ENCODE measurements at regions of chr6 and their contacts with region 1.

Region 1: GRCh38 chr6:31795616-31796298 is at the start of gene VARS1:
- DNase-seq: peak; percentile 96
- ATAC-seq: peak; percentile 84
- H3K4me3 Mint-ChIP-seq: peak within 1 kb of the TSS; percentile 99
- H3K27ac Mint-ChIP-seq: peak within 1 kb of the TSS; percentile 97
- H3K4me1 Mint-ChIP-seq: peaks cover 9% of the 10 kb centered on the region
- H3K27me3 Mint-ChIP-seq: no peaks in the 10 kb centered on the region
- CTCF ChIP-seq: peak; percentile 57
- total RNA-seq, gene VARS1: 147 to 177 TPM (median 161 TPM) in 3 replicates

Region 2: GRCh38 chr6:31680840-31681671 is 114.7 kb before region 1 on chr6 and contains the start of gene LY6G5C:
- CTCF ChIA-PET with region 1: interaction called, 11 read pairs
- POLR2A ChIA-PET with region 1: no interaction called
- DNase-seq: peak; percentile 77
- ATAC-seq: peak; percentile 39
- H3K4me3 Mint-ChIP-seq: peak within 1 kb of the TSS; percentile 89
- H3K27ac Mint-ChIP-seq: no peak within 1 kb of the TSS
- H3K4me1 Mint-ChIP-seq: peaks cover 16% of the 10 kb centered on the region
- H3K27me3 Mint-ChIP-seq: peaks cover 24% of the 10 kb centered on the region
- CTCF ChIP-seq: peak; percentile 6; the same call in 1 of the 2 replicates
- total RNA-seq, gene LY6G5C: 0.98 to 1.6 TPM (median 1.0 TPM) in 3 replicates

Region 3: GRCh38 chr6:31739639-31740396 is 55.9 kb before region 1 on chr6 and contains the start of gene MSH5:
- CTCF ChIA-PET with region 1: interaction called, 14 read pairs
- POLR2A ChIA-PET with region 1: interaction called, 3 read pairs
- DNase-seq: peak; percentile 98
- ATAC-seq: peak; percentile 89
- H3K4me3 Mint-ChIP-seq: peak within 1 kb of the TSS; percentile 80
- H3K27ac Mint-ChIP-seq: peak within 1 kb of the TSS; percentile 85
- H3K4me1 Mint-ChIP-seq: peaks cover 42% of the 10 kb centered on the region
- H3K27me3 Mint-ChIP-seq: no peaks in the 10 kb centered on the region; the same call in 1 of the 2 replicates
- CTCF ChIP-seq: no peak
- total RNA-seq, gene MSH5: 43.1 to 62.3 TPM (median 56.1 TPM) in 3 replicates

Region 4: DNA sequence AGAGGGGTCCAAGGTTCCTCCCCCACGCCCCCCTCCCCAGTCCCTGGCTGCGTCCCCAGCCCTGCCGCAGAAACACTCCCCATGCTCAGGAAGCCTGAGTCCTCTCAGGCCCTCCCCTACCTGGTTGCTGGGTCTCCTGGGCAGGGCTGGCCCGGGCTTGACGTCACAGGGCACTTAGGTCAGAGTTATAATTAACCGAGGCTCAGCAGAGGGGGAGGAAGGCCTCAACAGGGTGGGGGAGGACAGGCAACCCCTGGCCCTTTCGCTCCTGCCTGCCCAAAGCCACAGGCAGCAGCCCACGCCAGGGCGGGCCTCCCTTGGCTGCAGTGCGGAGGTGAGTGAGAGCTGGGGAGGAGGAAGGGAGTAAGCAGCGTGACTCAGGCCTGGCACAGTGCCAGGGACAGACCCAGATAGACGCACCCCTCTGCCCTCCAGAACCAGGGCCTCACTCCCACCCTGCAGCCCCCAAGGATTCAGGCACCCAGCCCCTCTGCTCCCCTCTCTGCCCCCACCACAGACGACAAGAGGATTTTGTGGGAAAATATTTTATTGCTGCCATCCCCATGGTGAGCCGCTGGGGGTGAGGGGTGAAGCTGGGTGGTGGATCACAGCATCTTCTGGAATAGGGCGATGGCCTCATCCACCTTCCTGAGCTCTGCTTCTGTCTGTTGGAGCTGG is 18.6 kb before region 1 on chr6 and contains the start of gene VWA7:
- CTCF ChIA-PET with region 1: interaction called, 16 read pairs
- POLR2A ChIA-PET with region 1: interaction called, 4 read pairs
- DNase-seq: peak; percentile 35
- ATAC-seq: peak; percentile 44
- H3K4me3 Mint-ChIP-seq: no peak within 1 kb of the TSS
- H3K27ac Mint-ChIP-seq: peak within 1 kb of the TSS; percentile 68; the same call in 1 of the 2 replicates
- H3K4me1 Mint-ChIP-seq: 0 out of 2 replicates have a peak, but pooled peaks cover 2% of the 10 kb centered on the region
- H3K27me3 Mint-ChIP-seq: no peaks in the 10 kb centered on the region
- CTCF ChIP-seq: no peak
- total RNA-seq, gene VWA7: 1.2 to 1.8 TPM (median 1.4 TPM) in 3 replicates

Region 5: GRCh38 chr6:31806465-31807272 is 10.9 kb after region 1 on chr6 and contains the start of gene LSM2:
- CTCF ChIA-PET with region 1: interaction called, 30 read pairs
- POLR2A ChIA-PET with region 1: interaction called, 4 read pairs
- DNase-seq: peak; percentile 98
- ATAC-seq: peak; percentile 95
- H3K4me3 Mint-ChIP-seq: peak within 1 kb of the TSS; percentile 99
- H3K27ac Mint-ChIP-seq: peak within 1 kb of the TSS; percentile 99
- H3K4me1 Mint-ChIP-seq: peaks cover 9% of the 10 kb centered on the region
- H3K27me3 Mint-ChIP-seq: no peaks in the 10 kb centered on the region; the same call in 1 of the 2 replicates
- CTCF ChIP-seq: no peak
- total RNA-seq, gene LSM2: 104 to 121 TPM (median 119 TPM) in 3 replicates

Region 6: DNA sequence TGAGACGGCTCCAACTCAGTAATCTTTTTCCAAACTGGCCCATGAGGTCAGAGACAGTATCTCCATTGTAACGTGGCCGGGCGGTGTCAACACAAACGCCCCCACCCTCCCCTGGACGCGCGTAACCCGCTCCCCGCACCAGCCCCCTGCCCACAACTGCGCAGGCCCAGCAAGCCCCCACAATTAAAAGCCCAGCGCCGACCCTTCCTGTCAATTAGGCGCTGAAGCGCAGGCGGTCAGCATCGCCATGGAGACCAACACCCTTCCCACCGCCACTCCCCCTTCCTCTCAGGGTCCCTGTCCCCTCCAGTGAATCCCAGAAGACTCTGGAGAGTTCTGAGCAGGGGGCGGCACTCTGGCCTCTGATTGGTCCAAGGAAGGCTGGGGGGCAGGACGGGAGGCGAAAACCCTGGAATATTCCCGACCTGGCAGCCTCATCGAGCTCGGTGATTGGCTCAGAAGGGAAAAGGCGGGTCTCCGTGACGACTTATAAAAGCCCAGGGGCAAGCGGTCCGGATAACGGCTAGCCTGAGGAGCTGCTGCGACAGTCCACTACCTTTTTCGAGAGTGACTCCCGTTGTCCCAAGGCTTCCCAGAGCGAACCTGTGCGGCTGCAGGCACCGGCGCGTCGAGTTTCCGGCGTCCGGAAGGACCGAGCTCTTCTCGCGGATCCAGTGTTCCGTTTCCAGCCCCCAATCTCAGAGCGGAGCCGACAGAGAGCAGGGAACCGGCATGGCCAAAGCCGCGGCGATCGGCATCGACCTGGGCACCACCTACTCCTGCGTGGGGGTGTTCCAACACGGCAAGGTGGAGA is 19.5 kb after region 1 on chr6 and contains the starts of genes HSPA1A and HSPA1L:
- CTCF ChIA-PET with region 1: interaction called, 19 read pairs
- POLR2A ChIA-PET with region 1: interaction called, 18 read pairs
- DNase-seq: peak; percentile 98
- ATAC-seq: peak; percentile 91
- H3K4me3 Mint-ChIP-seq: peak within 1 kb of the TSS; percentile 85
- H3K27ac Mint-ChIP-seq: peak within 1 kb of the TSS; percentile 98
- H3K4me1 Mint-ChIP-seq: peaks cover 27% of the 10 kb centered on the region
- H3K27me3 Mint-ChIP-seq: no peaks in the 10 kb centered on the region; the same call in 1 of the 2 replicates
- CTCF ChIP-seq: no peak
- total RNA-seq, gene HSPA1A: 57.2 to 80.1 TPM (median 75.8 TPM) in 3 replicates
- total RNA-seq, gene HSPA1L: 1.2 to 2.1 TPM (median 1.9 TPM) in 3 replicates

Region 7: GRCh38 chr6:31862344-31863227 is 66.8 kb after region 1 on chr6 and contains the start of gene NEU1:
- CTCF ChIA-PET with region 1: interaction called, 15 read pairs
- POLR2A ChIA-PET with region 1: no interaction called
- DNase-seq: peak; percentile 99
- ATAC-seq: peak; percentile 93
- H3K4me3 Mint-ChIP-seq: peak within 1 kb of the TSS; percentile 97
- H3K27ac Mint-ChIP-seq: peak within 1 kb of the TSS; percentile 99
- H3K4me1 Mint-ChIP-seq: peaks cover 19% of the 10 kb centered on the region
- H3K27me3 Mint-ChIP-seq: peaks cover 2% of the 10 kb centered on the region; the same call in 1 of the 2 replicates
- CTCF ChIP-seq: no peak
- total RNA-seq, gene NEU1: 42.6 to 44.8 TPM (median 42.8 TPM) in 3 replicates

Measured in WTC11 (cell line).